Esophagus muscularis mucosa (tissue), 4 donors: ENCODE measurements at regions of chr4 and their contacts with region 1.

Region 1: GRCh38 chr4:156230176-156230575 is 276.5 kb upstream of the CTSO start:
- DNase-seq: no peak
- H3K4me3 ChIP-seq: no peak overlapping the region
- H3K27ac ChIP-seq: no peak overlapping the region
- H3K4me1 ChIP-seq: no peaks in the 10 kb centered on the region
- H3K27me3 ChIP-seq: no peaks in the 10 kb centered on the region
- CTCF ChIP-seq: no peak
- EP300 ChIP-seq: no peak
- POLR2A ChIP-seq: no peak

Region 2: GRCh38 chr4:156261230-156261629 is 31.1 kb after region 1 on chr4:
- intact Hi-C with region 1: no loop called
- DNase-seq: no peak
- H3K4me3 ChIP-seq: no peak overlapping the region
- H3K27ac ChIP-seq: no peak overlapping the region
- H3K4me1 ChIP-seq: no peaks in the 10 kb centered on the region
- H3K27me3 ChIP-seq: no peaks in the 10 kb centered on the region
- CTCF ChIP-seq: no peak
- EP300 ChIP-seq: no peak
- POLR2A ChIP-seq: no peak

Region 3: GRCh38 chr4:157727163-157727562 is 1497.0 kb after region 1 on chr4:
- intact Hi-C with region 1: loop called (anchors 10 kb)
- DNase-seq: no peak
- H3K4me3 ChIP-seq: no peak overlapping the region
- H3K27ac ChIP-seq: no peak overlapping the region
- H3K4me1 ChIP-seq: no peaks in the 10 kb centered on the region
- H3K27me3 ChIP-seq: no peaks in the 10 kb centered on the region
- CTCF ChIP-seq: no peak
- EP300 ChIP-seq: no peak
- POLR2A ChIP-seq: no peak